Activated CD4-positive, alpha-beta T cell treated with anti-CD3 and anti-CD28 coated beads, Interleukin-2, amount 10 ng/mL, durations not matched to agents 24 days and 14 days (primary cell): ENCODE measurements at regions of chr12 and their contacts with region 1.

Region 1: GRCh38 chr12:75334384-75335030 is at the start of gene GLIPR1L1:
- DNase-seq: peak; percentile 94
- H3K4me3 Mint-ChIP-seq: peak within 1 kb of the TSS; percentile 78
- H3K27ac Mint-ChIP-seq: no peak within 1 kb of the TSS
- H3K4me1 Mint-ChIP-seq: peaks cover 21% of the 10 kb centered on the region
- H3K27me3 Mint-ChIP-seq: peaks cover 48% of the 10 kb centered on the region
- total RNA-seq, gene GLIPR1L1: not detected in 2 replicates

Region 2: GRCh38 chr12:75208856-75209811 is 125.4 kb before region 1 on chr12:
- intact Hi-C with region 1: loop called (anchors 10 kb)
- DNase-seq: peak; percentile 65
- H3K4me3 Mint-ChIP-seq: no peak overlapping the region
- H3K27ac Mint-ChIP-seq: no peak overlapping the region
- H3K4me1 Mint-ChIP-seq: no peaks in the 10 kb centered on the region
- H3K27me3 Mint-ChIP-seq: peaks cover 34% of the 10 kb centered on the region

Region 3: GRCh38 chr12:75349946-75350345 is 15.4 kb after region 1 on chr12:
- intact Hi-C with region 1: loop called (anchors 2 kb)
- DNase-seq: no peak
- H3K4me3 Mint-ChIP-seq: no peak overlapping the region
- H3K27ac Mint-ChIP-seq: no peak overlapping the region
- H3K4me1 Mint-ChIP-seq: peaks cover 11% of the 10 kb centered on the region
- H3K27me3 Mint-ChIP-seq: peaks cover 16% of the 10 kb centered on the region

Region 4: DNA sequence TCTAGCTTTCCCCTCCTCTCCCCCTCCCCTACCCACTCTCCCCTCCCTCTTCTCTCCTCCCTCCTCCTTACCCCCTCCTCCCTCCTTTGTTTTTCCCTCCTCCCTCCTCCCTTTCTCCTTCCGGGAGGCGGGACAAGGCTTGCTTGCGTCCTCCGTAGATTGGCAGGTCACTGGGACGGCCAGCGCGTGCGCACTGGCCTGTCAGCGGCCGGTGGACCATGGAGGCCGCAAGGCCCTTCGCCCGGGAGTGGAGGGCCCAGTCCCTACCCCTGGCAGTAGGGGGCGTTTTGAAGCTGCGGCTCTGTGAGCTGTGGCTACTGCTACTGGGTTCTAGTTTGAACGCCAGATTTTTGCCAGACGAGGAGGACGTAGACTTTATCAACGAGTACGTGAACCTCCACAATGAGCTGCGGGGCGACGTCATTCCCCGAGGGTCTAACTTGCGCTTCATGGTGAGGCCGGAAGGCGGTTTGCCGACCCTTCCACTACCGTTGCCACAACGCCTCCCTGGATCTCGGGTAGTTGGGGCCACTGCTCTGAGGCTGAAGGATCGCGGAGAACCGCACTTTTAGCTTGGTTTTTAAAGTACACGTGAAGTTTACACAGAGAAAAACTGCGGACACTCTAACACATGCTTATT is 56.5 kb after region 1 on chr12 and contains the start of gene GLIPR1L2:
- intact Hi-C with region 1: loop called (anchors 2 kb)
- DNase-seq: peak; percentile 95
- H3K4me3 Mint-ChIP-seq: peak within 1 kb of the TSS; percentile 94
- H3K27ac Mint-ChIP-seq: peak within 1 kb of the TSS; percentile 92
- H3K4me1 Mint-ChIP-seq: peaks cover 27% of the 10 kb centered on the region
- H3K27me3 Mint-ChIP-seq: peaks cover 3% of the 10 kb centered on the region
- total RNA-seq, gene GLIPR1L2: 0.36 TPM in 1 of 2 replicates, not detected in the other

Region 5: DNA sequence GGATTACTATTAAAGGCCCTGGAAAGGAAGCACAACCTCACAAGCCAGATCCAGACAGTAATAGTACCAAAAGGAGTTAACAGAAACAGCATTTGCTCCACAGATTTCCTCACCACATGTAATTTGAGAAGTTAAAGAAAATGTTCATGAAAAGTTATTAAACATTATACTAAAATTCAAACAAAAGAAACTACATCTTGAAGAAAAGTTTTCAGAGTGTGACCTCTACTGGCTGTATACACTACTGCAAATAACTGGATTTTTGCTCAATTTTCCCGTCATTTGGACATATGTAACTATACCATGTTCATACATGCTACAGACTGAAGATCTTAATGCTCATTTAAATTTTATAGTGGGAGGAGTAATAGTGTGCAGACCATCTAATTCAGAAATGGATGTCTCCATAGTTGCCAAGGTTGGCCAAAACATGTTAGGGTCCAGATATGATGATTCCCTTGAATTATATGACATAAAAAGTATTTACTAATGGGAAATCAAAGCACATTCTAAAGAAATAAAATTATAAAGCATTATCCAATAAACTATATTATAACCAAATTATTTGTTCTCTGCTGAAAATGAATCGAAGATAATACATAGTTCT is 171.3 kb after region 1 on chr12:
- intact Hi-C with region 1: loop called (anchors 1 kb)
- DNase-seq: no peak
- H3K4me3 Mint-ChIP-seq: no peak overlapping the region
- H3K27ac Mint-ChIP-seq: no peak overlapping the region
- H3K4me1 Mint-ChIP-seq: peaks cover 28% of the 10 kb centered on the region
- H3K27me3 Mint-ChIP-seq: no peaks in the 10 kb centered on the region

Region 6: GRCh38 chr12:75585330-75585729 is 250.8 kb after region 1 on chr12:
- intact Hi-C with region 1: no loop called
- DNase-seq: peak; percentile 6
- H3K4me3 Mint-ChIP-seq: no peak overlapping the region
- H3K27ac Mint-ChIP-seq: no peak overlapping the region
- H3K4me1 Mint-ChIP-seq: no peaks in the 10 kb centered on the region
- H3K27me3 Mint-ChIP-seq: peaks cover 5% of the 10 kb centered on the region

Region 7: GRCh38 chr12:76037130-76038103 is 702.9 kb after region 1 on chr12:
- intact Hi-C with region 1: loop called (anchors 5 kb)
- DNase-seq: peak; percentile 80
- H3K4me3 Mint-ChIP-seq: no peak overlapping the region
- H3K27ac Mint-ChIP-seq: no peak overlapping the region
- H3K4me1 Mint-ChIP-seq: peaks cover 24% of the 10 kb centered on the region
- H3K27me3 Mint-ChIP-seq: no peaks in the 10 kb centered on the region